HEK293 (cell line): ENCODE measurements at regions of chr3 and their contacts with region 1.

Region 1: GRCh38 chr3:134239538-134239937 is 11.1 kb downstream of the RYK start:
- H3K4me3 ChIP-seq: no peak overlapping the region
- H3K27ac ChIP-seq: no peak overlapping the region
- H3K4me1 ChIP-seq: peaks cover 32% of the 10 kb centered on the region
- CTCF ChIP-seq: no peak

Region 2: GRCh38 chr3:134222835-134223234 is 16.7 kb before region 1 on chr3:
- CTCF ChIA-PET with region 1: interaction called, 13 read pairs
- POLR2A ChIA-PET with region 1: no interaction called
- H3K4me3 ChIP-seq: no peak overlapping the region
- H3K27ac ChIP-seq: no peak overlapping the region
- H3K4me1 ChIP-seq: peaks cover 6% of the 10 kb centered on the region; the same call in 1 of the 2 replicates
- CTCF ChIP-seq: no peak

Region 3: DNA sequence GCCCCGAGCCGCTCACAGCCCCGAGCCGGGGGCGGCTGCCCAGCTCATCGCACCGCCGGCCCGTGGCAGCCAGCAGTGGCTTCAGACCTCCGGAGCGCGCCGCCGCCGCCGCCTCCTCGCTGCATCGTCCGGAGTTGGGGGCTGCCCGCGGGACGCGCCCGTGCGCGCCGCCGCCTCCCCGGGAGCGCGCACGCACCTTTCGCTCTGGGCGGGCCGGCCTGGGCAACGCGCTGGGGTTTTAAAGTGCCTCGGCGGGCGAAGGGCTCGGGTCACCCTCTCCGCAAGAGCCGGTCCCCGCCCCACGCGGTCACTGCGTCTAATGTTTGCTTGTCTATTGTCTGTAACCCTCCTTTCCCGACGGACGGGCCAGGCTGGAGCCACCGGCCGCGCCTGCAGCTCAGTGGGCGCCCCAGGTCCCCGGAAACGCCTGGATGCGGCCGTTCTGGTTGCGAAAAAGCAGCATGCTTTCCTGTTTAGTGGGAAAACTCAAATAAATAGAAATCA is 11.2 kb after region 1 on chr3 and contains the start of gene RYK:
- CTCF ChIA-PET with region 1: no interaction called
- POLR2A ChIA-PET with region 1: no interaction called
- H3K4me3 ChIP-seq: peak within 1 kb of the TSS; percentile 76
- H3K27ac ChIP-seq: peak within 1 kb of the TSS; percentile 88
- H3K4me1 ChIP-seq: no peaks in the 10 kb centered on the region
- CTCF ChIP-seq: no peak